BJ (cell line): ENCODE measurements at regions of chr3 and their contacts with region 1.

Region 1: GRCh38 chr3:9647450-9647849 is 1.9 kb upstream of the MTMR14 start:
- DNase-seq: no peak
- H3K4me3 ChIP-seq: no peak overlapping the region
- H3K27me3 ChIP-seq: no peaks in the 10 kb centered on the region
- CTCF ChIP-seq: no peak

Region 2: GRCh38 chr3:9330166-9330703 is 317.2 kb before region 1 on chr3:
- CTCF ChIA-PET with region 1: no interaction called
- POLR2A ChIA-PET with region 1: interaction called, 10 read pairs
- DNase-seq: no peak
- H3K4me3 ChIP-seq: no peak overlapping the region
- H3K27me3 ChIP-seq: peaks cover 3% of the 10 kb centered on the region
- CTCF ChIP-seq: no peak

Region 3: GRCh38 chr3:9630550-9631139 is 16.8 kb before region 1 on chr3:
- CTCF ChIA-PET with region 1: no interaction called
- POLR2A ChIA-PET with region 1: no interaction called
- DNase-seq: no peak
- H3K4me3 ChIP-seq: no peak overlapping the region
- H3K27me3 ChIP-seq: no peaks in the 10 kb centered on the region
- CTCF ChIP-seq: no peak

Region 4: DNA sequence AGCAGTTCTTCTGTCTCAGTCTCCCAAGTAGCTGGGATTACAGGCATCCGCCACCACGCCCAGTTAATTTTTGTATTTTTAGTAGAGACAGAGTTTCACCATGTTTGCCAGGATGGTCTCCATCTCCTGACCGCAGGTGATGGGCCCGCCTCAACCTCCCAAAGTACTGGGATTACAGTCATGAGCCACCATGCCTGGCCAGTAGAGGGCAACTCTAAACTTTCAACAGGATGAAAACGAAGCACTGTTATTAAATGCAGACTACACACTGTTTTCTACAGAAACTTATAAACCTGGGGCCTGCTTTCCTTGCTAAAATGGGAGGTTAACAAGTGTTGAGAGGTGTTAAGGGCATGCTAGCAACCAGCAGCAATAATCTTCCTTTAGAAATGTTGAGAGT is 153.1 kb after region 1 on chr3:
- CTCF ChIA-PET with region 1: no interaction called
- POLR2A ChIA-PET with region 1: no interaction called
- DNase-seq: no peak
- H3K4me3 ChIP-seq: no peak overlapping the region
- H3K27me3 ChIP-seq: no peaks in the 10 kb centered on the region
- CTCF ChIP-seq: peak; percentile 36